Dorsolateral prefrontal cortex (tissue), 120 donors: ENCODE measurements at regions of chr1 and their contacts with region 1.

Region 1: GRCh38 chr1:206635080-206635977 is at the start of gene DYRK3:
- DNase-seq: peak; percentile 87 to 97 (median 92)
- H3K4me3 ChIP-seq: peak within 1 kb of the TSS; percentile 57 to 100 (median 90)
- H3K27ac ChIP-seq: peak within 1 kb of the TSS in 48 of 59 donors; percentile 9 to 86 (median 63)
- H3K27me3 ChIP-seq: no peaks in the 10 kb centered on the region
- CTCF ChIP-seq: peak in 48 of 56 donors; percentile 9 to 61 (median 42)
- total RNA-seq, gene DYRK3: 2.4 to 12.2 (median 5.3) TPM

Region 2: GRCh38 chr1:206612129-206612876 is 23.0 kb before region 1 on chr1 and contains the start of gene EIF2D:
- intact Hi-C with region 1: loop called in 1 of 2 experiments (anchors 1 kb)
- DNase-seq: peak; percentile 88 to 96 (median 91)
- H3K4me3 ChIP-seq: peak within 1 kb of the TSS; percentile 61 to 99 (median 84)
- H3K27ac ChIP-seq: peak within 1 kb of the TSS; percentile 54 to 93 (median 85)
- H3K27me3 ChIP-seq: no peaks in the 10 kb centered on the region
- CTCF ChIP-seq: peak; percentile 74 to 99 (median 95)
- total RNA-seq, gene EIF2D: 19.2 to 56.2 (median 35.0) TPM

Region 3: GRCh38 chr1:206663832-206664652 is 28.7 kb after region 1 on chr1:
- intact Hi-C with region 1: loop called (anchors 1 kb)
- DNase-seq: peak in 6 of 10 donors; percentile 39 to 58 (median 52)
- H3K4me3 ChIP-seq: peak overlapping the region in 51 of 59 donors; percentile 3 to 56 (median 34)
- H3K27ac ChIP-seq: peak overlapping the region in 3 of 59 donors; percentile 17 to 50 (median 38)
- H3K27me3 ChIP-seq: peaks cover 0 to 12% (median 0%) of the 10 kb centered on the region in 45 donors
- CTCF ChIP-seq: peak; percentile 74 to 96 (median 86)

Region 4: DNA sequence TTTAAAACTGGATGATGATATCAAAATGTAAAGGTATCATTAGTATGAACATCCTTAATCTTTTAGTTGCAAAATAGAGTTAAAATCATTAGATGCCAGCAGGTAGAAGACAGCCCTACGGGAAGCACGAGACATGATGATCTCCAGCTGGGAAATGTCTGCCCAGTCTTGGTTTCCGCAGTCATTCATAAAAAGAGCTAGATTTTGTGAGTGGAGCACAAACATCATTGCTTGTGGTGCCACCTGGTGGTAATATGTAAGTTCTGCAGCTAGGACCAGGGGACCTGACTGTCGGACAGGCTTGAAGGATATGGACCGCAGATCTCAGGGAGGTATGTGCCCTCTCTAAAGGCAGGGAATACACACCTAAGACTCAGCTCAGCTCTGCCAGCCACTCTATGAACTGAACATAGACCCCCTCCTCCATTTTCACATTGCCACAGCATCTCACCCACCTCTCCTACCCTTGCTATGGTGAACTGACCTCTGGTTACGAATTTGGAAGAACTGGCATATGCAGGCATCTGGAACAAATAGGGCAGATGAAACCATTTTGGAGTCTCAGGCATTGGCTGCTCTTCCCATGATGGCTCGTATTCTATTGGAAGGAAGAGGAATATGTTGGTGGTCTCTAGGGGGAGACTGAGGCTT is 277.2 kb after region 1 on chr1:
- intact Hi-C with region 1: loop called (anchors 2 to 10 kb)
- DNase-seq: peak; percentile 40 to 83 (median 70)
- H3K4me3 ChIP-seq: no peak overlapping the region
- H3K27ac ChIP-seq: no peak overlapping the region
- H3K27me3 ChIP-seq: peaks cover 0 to 40% (median 22%) of the 10 kb centered on the region in 45 donors
- CTCF ChIP-seq: peak; percentile 70 to 98 (median 93)